GM18951 (cell line): ENCODE measurements at regions of chr10 and their contacts with region 1.

Region 1: GRCh38 chr10:122342293-122343134 is 32.0 kb upstream of the PLEKHA1 start:
- POLR2A ChIP-seq: no peak

Region 2: GRCh38 chr10:122419876-122420623 is 77.5 kb after region 1 on chr10:
- in situ Hi-C with region 1: loop called (anchors 10 kb)
- POLR2A ChIP-seq: no peak